ENCODE measurements at regions of chr20 and their contacts with region 1.

Region 1: GRCh38 chr20:45771182-45771759 is 20.4 kb downstream of the WFDC3 start:
- DNase-seq: peak; percentile 81
- H3K27ac ChIP-seq: no peak overlapping the region
- CTCF ChIP-seq: peak; percentile 99

Region 2: DNA sequence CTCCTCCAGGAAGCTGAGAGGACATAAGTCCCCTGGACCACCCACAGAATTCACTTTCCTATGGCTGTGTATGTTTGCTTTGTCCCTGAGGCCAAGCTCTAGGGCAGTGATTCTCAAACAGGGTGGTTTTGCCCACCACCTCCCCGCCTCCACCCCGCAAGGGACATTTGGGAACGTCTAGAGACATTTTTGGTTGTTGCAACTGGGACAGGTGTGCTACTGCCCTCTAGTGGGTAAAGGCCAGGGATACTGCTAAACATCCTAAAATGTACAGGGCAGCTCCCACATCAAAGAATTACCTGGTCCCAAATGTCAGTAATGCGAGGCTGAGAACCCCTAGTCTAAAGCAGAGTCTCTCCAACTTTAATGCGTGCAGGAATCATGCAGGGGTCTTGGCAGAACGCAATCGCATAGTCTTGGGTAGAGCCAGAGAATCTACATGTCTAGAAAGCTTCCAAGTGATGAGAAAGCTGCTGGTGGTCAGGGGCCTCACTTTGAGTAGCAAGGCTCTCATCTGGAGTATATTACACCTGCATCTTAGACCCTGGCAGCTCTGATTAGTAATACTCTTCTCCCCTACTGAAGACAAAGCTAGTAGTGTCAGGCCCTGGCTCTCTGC is 675.4 kb before region 1 on chr20:
- CTCF ChIA-PET with region 1: interaction called, 11 read pairs
- POLR2A ChIA-PET with region 1: no interaction called
- DNase-seq: peak; percentile 83
- H3K27ac ChIP-seq: no peak overlapping the region
- CTCF ChIP-seq: peak; percentile 98

Region 3: GRCh38 chr20:45362804-45363610 is 408.3 kb before region 1 on chr20 and contains the start of gene SYS1:
- CTCF ChIA-PET with region 1: interaction called, 10 read pairs
- POLR2A ChIA-PET with region 1: no interaction called
- DNase-seq: peak; percentile 100
- H3K27ac ChIP-seq: peak within 1 kb of the TSS; percentile 90
- CTCF ChIP-seq: peak; percentile 100

Region 4: DNA sequence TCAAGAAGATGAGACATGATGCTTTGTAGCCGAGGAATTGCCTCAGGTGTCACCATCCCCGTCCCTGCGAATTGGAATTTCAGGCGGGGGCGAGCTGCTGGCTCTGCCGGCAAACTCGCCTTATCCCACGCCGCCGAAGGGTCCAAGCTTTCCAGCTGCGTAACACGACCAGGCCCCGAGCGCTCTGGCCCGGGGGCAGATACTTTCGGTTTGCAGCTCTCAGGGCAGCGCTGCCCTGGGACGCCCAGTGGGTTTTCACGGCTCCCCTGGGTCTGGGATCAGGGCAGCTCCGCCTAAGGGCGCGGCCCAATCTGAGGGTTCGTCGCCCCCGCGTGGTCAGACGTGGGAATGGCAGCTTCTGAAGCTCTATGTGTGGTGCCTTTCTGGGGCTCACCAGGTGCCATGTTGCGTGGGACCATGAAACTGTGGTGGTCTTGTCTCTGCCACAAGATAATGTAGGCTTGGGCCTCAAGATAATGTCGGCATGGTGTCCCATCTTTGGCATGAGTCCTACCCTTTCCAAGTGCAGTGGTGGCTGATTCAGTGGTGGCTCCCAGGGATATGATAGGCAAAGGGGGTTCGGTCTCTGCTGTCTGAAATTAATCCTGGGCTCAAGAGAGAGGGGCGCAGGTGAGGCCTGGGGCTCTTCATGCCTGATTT is 334.4 kb before region 1 on chr20:
- CTCF ChIA-PET with region 1: interaction called, 24 read pairs
- POLR2A ChIA-PET with region 1: no interaction called
- DNase-seq: peak; percentile 97
- H3K27ac ChIP-seq: peak overlapping the region; percentile 51
- CTCF ChIP-seq: peak; percentile 99

Region 5: GRCh38 chr20:45502561-45502960 is 268.7 kb before region 1 on chr20:
- CTCF ChIA-PET with region 1: interaction called, 15 read pairs
- POLR2A ChIA-PET with region 1: no interaction called
- DNase-seq: no peak
- H3K27ac ChIP-seq: no peak overlapping the region
- CTCF ChIP-seq: no peak

Region 6: DNA sequence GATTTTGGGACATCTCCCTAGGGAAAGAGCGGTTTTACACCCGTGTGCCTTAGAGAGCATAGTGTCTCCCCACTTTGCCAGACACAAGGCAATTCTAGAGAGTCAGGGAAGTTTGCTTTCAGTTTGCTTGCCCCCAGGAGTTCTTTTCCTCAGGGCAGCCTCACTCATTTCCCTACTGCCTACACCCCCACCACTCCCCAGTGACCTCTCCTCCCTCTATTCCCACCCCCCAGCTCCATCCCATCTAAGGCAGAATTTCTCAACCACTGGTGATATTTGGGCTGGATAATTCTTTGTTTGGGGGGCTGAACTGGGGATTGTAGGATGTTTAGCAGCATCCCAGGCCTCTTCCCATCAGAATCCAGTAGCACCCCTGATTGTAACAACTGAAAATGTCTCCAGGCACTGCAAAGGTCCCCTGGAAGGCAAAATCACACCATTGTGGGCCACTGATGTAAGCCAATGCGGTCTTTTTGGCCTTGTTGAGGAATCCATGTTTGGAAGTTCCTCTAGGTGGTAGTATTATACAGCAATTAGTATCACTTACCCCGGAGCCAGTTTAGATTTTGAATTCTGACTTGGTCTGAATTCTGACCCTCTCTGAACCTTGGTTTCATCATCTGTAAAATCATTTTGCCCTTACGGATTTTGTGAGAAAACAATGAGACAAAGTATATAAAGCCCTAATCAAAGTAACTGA is 225.4 kb before region 1 on chr20:
- CTCF ChIA-PET with region 1: interaction called, 25 read pairs
- POLR2A ChIA-PET with region 1: interaction called, 3 read pairs
- DNase-seq: peak; percentile 77
- H3K27ac ChIP-seq: no peak overlapping the region
- CTCF ChIP-seq: no peak; the same call in 1 of the 2 replicates

Region 7: DNA sequence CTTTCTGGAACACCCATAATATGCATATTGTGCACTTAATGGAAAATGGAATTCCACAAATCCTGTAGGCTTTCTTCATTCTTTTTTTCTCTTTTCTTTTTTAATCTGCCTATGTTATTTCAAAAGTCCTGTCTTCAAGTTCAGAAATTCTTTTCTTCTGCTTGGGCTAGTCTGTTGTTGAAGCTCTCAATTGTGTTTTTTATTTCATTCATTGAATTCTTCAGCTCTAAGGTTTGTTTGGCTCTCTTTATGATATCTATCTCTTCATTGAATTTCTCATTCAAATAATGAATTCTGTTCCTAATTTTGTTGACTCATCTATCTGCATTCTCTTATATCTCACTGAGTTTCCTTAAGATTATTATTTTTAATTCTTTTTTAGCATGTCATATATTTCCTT is 39.1 kb before region 1 on chr20:
- CTCF ChIA-PET with region 1: no interaction called
- POLR2A ChIA-PET with region 1: no interaction called
- DNase-seq: no peak
- H3K27ac ChIP-seq: no peak overlapping the region
- CTCF ChIP-seq: no peak

Region 8: GRCh38 chr20:45993197-45993951 is 222.1 kb after region 1 on chr20:
- CTCF ChIA-PET with region 1: no interaction called
- POLR2A ChIA-PET with region 1: no interaction called
- DNase-seq: peak; percentile 100
- H3K27ac ChIP-seq: peak overlapping the region; percentile 86
- CTCF ChIP-seq: no peak